ENCODE measurements at regions of chr4 and their contacts with region 1.

Region 1: DNA sequence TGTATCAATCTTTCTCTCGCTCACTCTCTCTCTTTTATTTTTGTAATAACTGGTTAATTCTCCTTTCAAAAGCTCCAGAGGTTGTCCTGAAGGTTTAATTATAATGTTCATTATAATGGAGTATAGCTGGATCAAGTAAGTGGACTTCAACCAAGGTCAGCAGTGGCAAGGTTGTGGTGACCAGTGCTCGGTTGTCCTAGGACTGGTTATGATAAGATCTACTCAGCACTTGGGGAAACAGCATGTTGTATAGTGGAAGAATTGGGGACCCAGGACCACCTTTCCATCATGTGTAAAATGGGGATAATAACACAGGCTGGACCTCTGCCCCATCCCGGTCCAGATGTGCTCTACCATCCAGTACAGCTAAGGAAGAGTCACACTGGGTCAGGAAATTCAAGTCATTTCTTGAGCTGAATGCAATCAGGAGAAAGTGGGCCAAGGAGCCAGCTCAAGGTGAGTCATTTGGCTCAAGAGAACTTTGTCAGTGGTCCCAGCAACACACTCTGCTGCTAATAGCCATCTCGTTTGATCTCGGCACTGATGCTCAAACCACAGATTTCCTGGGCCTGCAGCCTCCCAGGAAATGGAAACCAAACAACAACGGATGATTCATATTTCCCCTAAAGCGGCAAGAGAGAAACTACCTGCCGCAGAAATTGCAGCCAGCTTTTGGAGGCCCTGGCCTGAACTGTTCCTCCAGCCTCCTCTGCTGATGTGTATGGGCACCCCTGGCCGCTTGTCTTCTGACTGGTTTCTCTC is 123.6 kb upstream of the RBPJ start:
- DNase-seq: peak; percentile 88
- H3K4me3 Mint-ChIP-seq: peak overlapping the region; percentile 55
- H3K27ac Mint-ChIP-seq: peak overlapping the region; percentile 86
- H3K4me1 Mint-ChIP-seq: peaks cover 71% of the 10 kb centered on the region
- H3K27me3 Mint-ChIP-seq: peaks cover 1% of the 10 kb centered on the region

Region 2: DNA sequence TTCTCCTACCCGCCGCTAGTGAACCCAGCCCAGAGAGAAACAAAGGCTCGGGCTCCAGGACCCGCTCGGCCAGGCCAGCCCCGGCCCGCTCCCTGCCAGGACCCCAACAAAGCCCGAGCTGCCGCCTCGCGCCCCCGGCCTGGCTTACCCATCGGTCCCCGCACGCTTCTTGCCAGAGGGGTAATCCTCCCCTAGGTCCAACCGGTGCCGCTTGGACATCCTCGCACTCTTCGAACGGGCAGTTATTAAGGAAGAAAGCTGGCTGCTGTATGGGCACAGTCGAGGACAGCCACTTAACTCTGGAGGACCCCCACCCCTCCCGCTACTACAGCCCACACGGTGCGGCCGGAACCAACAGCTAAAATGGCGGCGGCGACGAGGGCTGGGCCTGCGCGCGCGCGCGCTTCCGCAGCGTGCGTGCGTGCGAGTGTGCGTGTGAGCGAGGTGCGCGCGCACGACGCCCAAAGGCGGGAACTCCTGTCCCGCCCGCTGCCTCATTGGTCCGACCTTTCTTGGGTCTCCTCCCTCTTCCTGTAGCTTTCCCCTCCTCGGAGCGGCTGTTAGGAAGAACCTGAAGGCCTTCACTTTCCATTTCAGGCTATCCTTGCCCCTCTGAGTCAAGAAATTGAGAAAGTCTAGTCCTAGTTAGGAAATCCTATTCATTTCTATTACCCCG is 1612.9 kb before region 1 on chr4 and contains the start of gene DHX15:
- CTCF ChIA-PET with region 1: no interaction called
- POLR2A ChIA-PET with region 1: no interaction called
- intact Hi-C with region 1: loop called (anchors 10 kb)
- DNase-seq: peak; percentile 95
- H3K4me3 Mint-ChIP-seq: peak within 1 kb of the TSS; percentile 94
- H3K27ac Mint-ChIP-seq: peak within 1 kb of the TSS; percentile 95
- H3K4me1 Mint-ChIP-seq: peaks cover 32% of the 10 kb centered on the region
- H3K27me3 Mint-ChIP-seq: peaks cover 3% of the 10 kb centered on the region
- total RNA-seq, gene DHX15: 169 to 172 TPM

Region 3: DNA sequence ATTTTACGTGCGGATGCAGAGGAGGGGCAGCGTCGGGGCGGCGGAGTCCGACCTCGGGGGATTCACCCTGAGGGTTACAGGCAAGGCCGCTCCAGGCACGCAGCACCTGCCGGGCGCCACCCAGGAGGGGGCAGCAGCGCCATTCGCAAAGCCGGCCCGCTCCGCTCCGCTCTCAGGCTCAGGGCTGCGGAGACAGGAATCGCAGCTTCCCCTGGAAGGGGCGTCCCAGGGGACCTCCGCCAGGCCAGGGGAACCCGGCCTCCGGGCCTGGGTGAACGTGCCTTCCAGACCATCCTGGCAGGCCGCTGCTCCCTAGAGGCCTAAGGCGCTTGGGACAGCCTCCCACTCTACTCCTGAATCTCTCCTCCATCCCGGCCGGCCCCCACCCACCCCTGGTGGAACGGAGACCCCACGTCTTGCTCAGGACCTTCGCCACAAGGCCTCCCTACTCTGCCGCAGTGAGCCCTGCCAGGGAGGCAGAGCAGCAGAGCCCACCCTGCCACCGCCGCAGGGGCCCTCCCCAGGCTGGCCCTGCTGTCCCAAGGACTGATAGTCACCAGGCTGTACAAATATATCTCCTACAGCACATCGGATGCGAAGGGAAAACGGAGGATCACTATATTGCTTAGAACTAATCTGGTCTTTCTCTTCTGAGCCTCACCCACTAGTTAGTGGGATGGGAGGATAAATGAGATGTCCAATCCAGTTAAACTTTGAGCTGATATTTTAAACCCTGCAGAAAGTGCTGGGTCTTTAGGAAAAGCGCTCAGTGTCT is 168.2 kb before region 1 on chr4:
- CTCF ChIA-PET with region 1: interaction called, 7 read pairs
- POLR2A ChIA-PET with region 1: no interaction called
- intact Hi-C with region 1: loop called (anchors 5 kb)
- DNase-seq: peak; percentile 85
- H3K4me3 Mint-ChIP-seq: no peak overlapping the region
- H3K27ac Mint-ChIP-seq: no peak overlapping the region
- H3K4me1 Mint-ChIP-seq: peaks cover 16% of the 10 kb centered on the region
- H3K27me3 Mint-ChIP-seq: peaks cover 2% of the 10 kb centered on the region

Region 4: GRCh38 chr4:26088433-26088928 is 108.7 kb before region 1 on chr4:
- CTCF ChIA-PET with region 1: interaction called, 8 read pairs
- POLR2A ChIA-PET with region 1: interaction called, 14 read pairs
- intact Hi-C with region 1: loop called (anchors 1 kb)
- DNase-seq: peak; percentile 59
- H3K4me3 Mint-ChIP-seq: peak overlapping the region; percentile 62
- H3K27ac Mint-ChIP-seq: peak overlapping the region; percentile 94
- H3K4me1 Mint-ChIP-seq: peaks cover 61% of the 10 kb centered on the region
- H3K27me3 Mint-ChIP-seq: no peaks in the 10 kb centered on the region

Region 5: GRCh38 chr4:26233350-26233749 is 36.2 kb after region 1 on chr4:
- CTCF ChIA-PET with region 1: no interaction called
- POLR2A ChIA-PET with region 1: interaction called, 3 read pairs
- intact Hi-C with region 1: loop called (anchors 1 kb)
- DNase-seq: no peak
- H3K4me3 Mint-ChIP-seq: peak overlapping the region; percentile 33
- H3K27ac Mint-ChIP-seq: peak overlapping the region; percentile 28
- H3K4me1 Mint-ChIP-seq: peaks cover 22% of the 10 kb centered on the region
- H3K27me3 Mint-ChIP-seq: no peaks in the 10 kb centered on the region

Region 6: GRCh38 chr4:26319467-26319948 is 122.3 kb after region 1 on chr4:
- CTCF ChIA-PET with region 1: interaction called, 15 read pairs
- POLR2A ChIA-PET with region 1: interaction called, 38 read pairs
- intact Hi-C with region 1: loop called (anchors 1 kb)
- DNase-seq: peak; percentile 99
- H3K4me3 Mint-ChIP-seq: peak overlapping the region; percentile 100
- H3K27ac Mint-ChIP-seq: peak overlapping the region; percentile 100
- H3K4me1 Mint-ChIP-seq: peaks cover 35% of the 10 kb centered on the region
- H3K27me3 Mint-ChIP-seq: no peaks in the 10 kb centered on the region

Region 7: GRCh38 chr4:27000820-27001219 is 803.6 kb after region 1 on chr4:
- CTCF ChIA-PET with region 1: no interaction called
- POLR2A ChIA-PET with region 1: no interaction called
- intact Hi-C with region 1: loop called (anchors 10 kb)
- DNase-seq: no peak
- H3K4me3 Mint-ChIP-seq: no peak overlapping the region
- H3K27ac Mint-ChIP-seq: peak overlapping the region; percentile 51
- H3K4me1 Mint-ChIP-seq: peaks cover 52% of the 10 kb centered on the region
- H3K27me3 Mint-ChIP-seq: no peaks in the 10 kb centered on the region

Measured in activated CD4-positive, alpha-beta memory T cell treated with anti-CD3 and anti-CD28 coated beads for 36 hours (primary cell).